Activated CD4-positive, alpha-beta T cell treated with anti-CD3 and anti-CD28 coated beads for 36 hours (primary cell): ENCODE measurements at regions of chr16 and their contacts with region 1.

Region 1: GRCh38 chr16:88785106-88785924 is at the start of gene PIEZO1:
- DNase-seq: peak; percentile 85
- ATAC-seq: peak; percentile 5
- H3K4me3 Mint-ChIP-seq: peak within 1 kb of the TSS; percentile 66
- H3K27ac Mint-ChIP-seq: peak within 1 kb of the TSS; percentile 78
- H3K4me1 Mint-ChIP-seq: peaks cover 44% of the 10 kb centered on the region
- H3K27me3 Mint-ChIP-seq: no peaks in the 10 kb centered on the region
- total RNA-seq, gene PIEZO1: 105 to 126 TPM

Region 2: DNA sequence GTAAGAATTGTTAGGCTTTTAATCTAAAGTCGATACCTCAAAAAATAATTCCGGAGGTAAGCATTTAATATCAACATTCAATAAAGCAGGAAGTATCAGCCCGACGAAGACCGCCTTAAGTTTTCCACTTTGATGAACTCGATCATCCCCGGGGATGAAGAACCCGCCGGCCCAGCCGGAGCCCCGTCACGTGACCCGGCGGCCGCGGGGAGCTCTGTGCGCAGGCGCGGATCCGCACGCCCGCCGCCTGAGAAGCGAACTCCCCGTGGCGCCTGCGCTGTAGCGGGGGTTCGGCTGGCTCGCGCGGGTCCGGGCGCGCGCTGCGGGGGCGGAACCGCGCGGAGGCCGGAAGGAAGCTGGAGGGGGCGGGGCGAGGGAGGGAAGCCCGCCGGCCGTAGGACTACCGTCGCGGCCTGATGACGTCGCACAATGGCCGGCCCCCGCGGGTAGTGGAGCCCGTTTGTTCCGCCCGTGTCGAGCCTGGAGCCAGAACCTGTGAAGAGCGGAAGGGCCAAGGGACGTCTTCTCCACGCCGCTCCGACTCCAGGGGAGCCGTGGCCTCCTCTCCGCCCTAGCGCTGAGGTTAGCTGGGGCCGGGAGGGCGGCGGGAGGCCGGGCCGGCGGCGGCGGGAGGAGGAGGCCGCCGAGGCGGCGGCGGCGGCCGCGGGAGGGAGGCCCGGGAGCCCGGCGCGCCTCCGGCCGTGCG is 215.2 kb before region 1 on chr16 and contains the start of gene ZC3H18:
- CTCF ChIA-PET with region 1: interaction called, 4 read pairs
- POLR2A ChIA-PET with region 1: interaction called, 3 read pairs
- intact Hi-C with region 1: loop called in 1 of 2 experiments (anchors 1 kb)
- DNase-seq: peak; percentile 99
- ATAC-seq: peak; percentile 83
- H3K4me3 Mint-ChIP-seq: peak within 1 kb of the TSS; percentile 88
- H3K27ac Mint-ChIP-seq: peak within 1 kb of the TSS; percentile 79
- H3K4me1 Mint-ChIP-seq: peaks cover 44% of the 10 kb centered on the region
- H3K27me3 Mint-ChIP-seq: no peaks in the 10 kb centered on the region
- total RNA-seq, gene ZC3H18: 70.0 to 76.4 TPM

Region 3: GRCh38 chr16:88662843-88663606 is 122.3 kb before region 1 on chr16 and contains the start of gene MVD:
- CTCF ChIA-PET with region 1: no interaction called
- POLR2A ChIA-PET with region 1: no interaction called
- intact Hi-C with region 1: loop called in 1 of 2 experiments (anchors 2 kb)
- DNase-seq: peak; percentile 98
- ATAC-seq: peak; percentile 99
- H3K4me3 Mint-ChIP-seq: peak within 1 kb of the TSS; percentile 92
- H3K27ac Mint-ChIP-seq: peak within 1 kb of the TSS; percentile 88
- H3K4me1 Mint-ChIP-seq: peaks cover 14% of the 10 kb centered on the region
- H3K27me3 Mint-ChIP-seq: no peaks in the 10 kb centered on the region
- total RNA-seq, gene MVD: 62.8 to 81.1 TPM

Region 4: DNA sequence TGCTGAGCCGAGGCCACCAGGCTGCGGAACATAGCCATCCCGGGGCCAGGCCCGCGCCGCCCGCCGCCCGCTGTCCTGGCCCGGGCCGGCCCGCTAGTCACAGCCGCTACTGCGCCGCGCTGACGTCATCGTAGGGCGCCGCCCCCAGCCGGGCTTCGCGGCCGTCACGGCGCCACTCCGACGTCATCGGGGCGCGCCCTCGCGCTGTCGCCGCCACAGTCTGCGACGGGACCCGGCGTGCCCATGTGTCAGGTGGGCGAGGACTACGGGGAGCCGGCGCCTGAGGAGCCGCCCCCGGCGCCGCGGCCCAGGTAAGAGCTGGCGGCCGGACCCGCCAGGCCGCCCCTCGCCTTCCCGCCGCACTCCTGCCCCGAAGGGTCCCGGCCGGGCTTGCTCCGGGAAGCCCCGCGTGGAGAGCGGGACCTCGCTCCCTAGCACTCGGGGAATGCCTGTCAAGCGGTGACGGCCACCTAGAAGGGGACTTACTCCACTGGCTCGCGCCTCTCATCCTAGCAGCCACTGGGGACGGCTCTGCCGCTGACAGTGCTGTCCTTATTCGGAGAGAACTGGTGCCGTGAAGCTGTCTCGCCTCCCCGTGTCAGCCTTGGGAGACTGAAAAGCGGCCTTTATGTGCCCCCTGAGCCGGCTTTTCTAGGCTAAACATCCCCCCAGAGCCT is 78.9 kb before region 1 on chr16 and contains the starts of genes CTU2 and RNF166:
- CTCF ChIA-PET with region 1: interaction called, 3 read pairs
- POLR2A ChIA-PET with region 1: no interaction called
- intact Hi-C with region 1: loop called (anchors 1 kb)
- DNase-seq: peak; percentile 96
- ATAC-seq: peak; percentile 59
- H3K4me3 Mint-ChIP-seq: peak within 1 kb of the TSS; percentile 92
- H3K27ac Mint-ChIP-seq: peak within 1 kb of the TSS; percentile 92
- H3K4me1 Mint-ChIP-seq: peaks cover 43% of the 10 kb centered on the region
- H3K27me3 Mint-ChIP-seq: no peaks in the 10 kb centered on the region
- total RNA-seq, gene CTU2: 29.6 to 36.2 TPM
- total RNA-seq, gene RNF166: 44.0 to 49.7 TPM

Region 5: GRCh38 chr16:88770461-88771293 is 14.6 kb before region 1 on chr16:
- CTCF ChIA-PET with region 1: interaction called, 18 read pairs
- POLR2A ChIA-PET with region 1: no interaction called
- intact Hi-C with region 1: no loop called
- DNase-seq: peak; percentile 55
- ATAC-seq: peak; percentile 58
- H3K4me3 Mint-ChIP-seq: no peak overlapping the region
- H3K27ac Mint-ChIP-seq: peak overlapping the region; percentile 42
- H3K4me1 Mint-ChIP-seq: peaks cover 28% of the 10 kb centered on the region
- H3K27me3 Mint-ChIP-seq: no peaks in the 10 kb centered on the region

Region 6: DNA sequence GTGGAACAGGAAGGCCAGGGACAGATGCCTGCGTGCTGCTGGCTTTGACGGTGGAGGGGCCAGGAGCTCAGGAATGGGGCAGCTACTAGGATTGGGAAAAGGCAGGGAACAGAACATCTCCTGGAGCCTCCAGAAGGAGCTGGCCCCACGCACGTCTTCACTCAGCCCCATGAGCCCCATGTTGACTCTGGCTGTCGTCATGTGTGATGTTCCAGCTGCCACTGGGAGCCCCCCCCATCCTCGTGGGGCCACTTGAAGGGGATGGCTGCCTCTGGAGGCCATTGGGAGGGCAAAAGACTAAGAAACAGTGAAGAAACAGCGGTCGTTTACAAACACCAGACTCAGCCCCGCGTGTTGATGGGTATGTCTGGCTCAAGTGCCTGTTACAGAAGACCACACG is 44.9 kb after region 1 on chr16:
- CTCF ChIA-PET with region 1: no interaction called
- POLR2A ChIA-PET with region 1: no interaction called
- intact Hi-C with region 1: no loop called
- DNase-seq: no peak
- ATAC-seq: no peak
- H3K4me3 Mint-ChIP-seq: no peak overlapping the region
- H3K27ac Mint-ChIP-seq: no peak overlapping the region
- H3K4me1 Mint-ChIP-seq: no peaks in the 10 kb centered on the region
- H3K27me3 Mint-ChIP-seq: no peaks in the 10 kb centered on the region

Region 7: GRCh38 chr16:88901718-88902337 is 116.5 kb after region 1 on chr16:
- CTCF ChIA-PET with region 1: no interaction called
- POLR2A ChIA-PET with region 1: no interaction called
- intact Hi-C with region 1: no loop called
- DNase-seq: no peak
- ATAC-seq: no peak
- H3K4me3 Mint-ChIP-seq: no peak overlapping the region
- H3K27ac Mint-ChIP-seq: no peak overlapping the region
- H3K4me1 Mint-ChIP-seq: no peaks in the 10 kb centered on the region
- H3K27me3 Mint-ChIP-seq: no peaks in the 10 kb centered on the region

Region 8: DNA sequence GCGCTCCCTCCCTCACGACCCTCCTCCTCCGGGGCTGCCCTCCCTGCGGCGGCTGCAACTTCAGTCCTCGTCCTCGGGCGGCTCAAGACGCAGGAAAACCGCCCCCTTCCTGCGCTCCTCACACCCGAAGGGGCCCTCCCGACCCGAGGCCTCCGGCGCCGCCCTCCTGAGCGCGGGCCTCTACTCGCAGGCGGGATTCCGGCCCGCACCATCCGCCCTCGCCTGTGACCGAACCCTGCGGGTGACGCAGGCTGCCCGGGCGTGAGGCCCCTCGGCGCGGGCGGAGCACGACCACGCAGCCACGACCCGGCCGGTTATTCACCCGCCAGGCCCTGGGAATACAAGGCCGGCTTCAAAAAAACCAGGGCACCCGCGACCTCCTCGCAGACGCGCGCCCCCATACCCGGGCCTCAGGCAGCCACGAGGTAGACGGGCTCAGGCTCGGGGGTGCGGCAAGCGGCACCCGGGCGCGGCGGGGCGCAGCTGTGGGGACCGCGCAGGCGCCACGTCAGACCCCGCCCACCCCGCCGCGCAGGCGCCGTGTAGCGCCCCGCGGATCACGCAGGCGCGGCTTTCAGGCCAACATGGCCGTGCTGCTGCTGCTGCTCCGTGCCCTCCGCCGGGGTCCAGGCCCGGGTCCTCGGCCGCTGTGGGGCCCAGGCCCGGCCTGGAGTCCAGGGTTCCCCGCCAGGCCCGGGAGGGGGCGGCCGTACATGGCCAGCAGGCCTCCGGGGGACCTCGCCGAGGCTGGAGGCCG is 722.7 kb after region 1 on chr16 and contains the start of gene SPG7:
- CTCF ChIA-PET with region 1: no interaction called
- POLR2A ChIA-PET with region 1: no interaction called
- intact Hi-C with region 1: loop called in 1 of 2 experiments (anchors 10 kb)
- DNase-seq: peak; percentile 94
- ATAC-seq: peak; percentile 74
- H3K4me3 Mint-ChIP-seq: peak within 1 kb of the TSS; percentile 90
- H3K27ac Mint-ChIP-seq: peak within 1 kb of the TSS; percentile 97
- H3K4me1 Mint-ChIP-seq: peaks cover 31% of the 10 kb centered on the region
- H3K27me3 Mint-ChIP-seq: no peaks in the 10 kb centered on the region
- total RNA-seq, gene SPG7: 68.6 to 76.7 TPM